Heart left ventricle (tissue), 16 donors: ENCODE measurements at regions of chr2 and their contacts with region 1.

Region 1: GRCh38 chr2:160406591-160407392 is 86.8 kb downstream of the RBMS1 start:
- DNase-seq: peak; percentile 60 to 64 (median 61)
- ATAC-seq: peak; percentile 25 to 58 (median 38)
- H3K4me3 ChIP-seq: peak overlapping the region; percentile 81 to 96 (median 90)
- H3K27ac ChIP-seq: peak overlapping the region; percentile 89 to 99 (median 95)
- H3K4me1 ChIP-seq: peaks cover 8 to 81% (median 70%) of the 10 kb centered on the region in 12 donors
- H3K27me3 ChIP-seq: no peaks in the 10 kb centered on the region
- CTCF ChIP-seq: no peak
- POLR2A ChIP-seq: peak in 1 of 2 donors; percentile 34

Region 2: DNA sequence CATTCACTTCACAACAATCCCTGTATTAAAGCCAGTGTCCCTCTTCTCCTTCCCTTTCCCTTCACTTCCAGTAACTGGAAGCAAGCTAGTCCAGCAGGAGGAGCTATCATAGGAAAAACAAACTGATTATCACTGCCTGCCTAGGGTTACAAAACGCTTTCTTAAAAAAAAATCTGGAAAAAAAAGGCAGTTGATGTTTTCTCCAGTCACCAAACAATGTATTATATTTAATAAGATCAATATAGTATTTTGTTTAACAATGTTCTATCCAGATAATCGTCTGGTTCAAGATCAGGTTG is 128.0 kb before region 1 on chr2:
- intact Hi-C with region 1: loop called in 3 of 10 experiments (anchors 10 kb)
- DNase-seq: no peak
- ATAC-seq: peak in 3 of 4 donors; percentile 69 to 74 (median 70)
- H3K4me3 ChIP-seq: no peak overlapping the region
- H3K27ac ChIP-seq: peak overlapping the region in 6 of 12 donors; percentile 28 to 83 (median 41)
- H3K4me1 ChIP-seq: peaks cover 0 to 45% (median 15%) of the 10 kb centered on the region in 12 donors
- H3K27me3 ChIP-seq: no peaks in the 10 kb centered on the region
- CTCF ChIP-seq: peak; percentile 18 to 75 (median 52)
- POLR2A ChIP-seq: no peak

Region 3: GRCh38 chr2:160294339-160294803 is 112.4 kb before region 1 on chr2:
- intact Hi-C with region 1: loop called in 3 of 10 experiments (anchors 5 to 10 kb)
- DNase-seq: peak; percentile 60 to 84 (median 65)
- ATAC-seq: peak; percentile 51 to 85 (median 80)
- H3K4me3 ChIP-seq: no peak overlapping the region
- H3K27ac ChIP-seq: peak overlapping the region in 11 of 12 donors; percentile 2 to 79 (median 26)
- H3K4me1 ChIP-seq: peaks cover 14 to 85% (median 75%) of the 10 kb centered on the region in 12 donors
- H3K27me3 ChIP-seq: no peaks in the 10 kb centered on the region
- CTCF ChIP-seq: no peak
- POLR2A ChIP-seq: no peak

Region 4: GRCh38 chr2:160367887-160368286 is 38.9 kb before region 1 on chr2:
- intact Hi-C with region 1: loop called in 2 of 10 experiments (anchors 5 kb)
- DNase-seq: no peak
- ATAC-seq: peak in 3 of 4 donors; percentile 20 to 53 (median 27)
- H3K4me3 ChIP-seq: peak overlapping the region in 6 of 12 donors; percentile 19 to 37 (median 30)
- H3K27ac ChIP-seq: peak overlapping the region in 10 of 12 donors; percentile 41 to 92 (median 62)
- H3K4me1 ChIP-seq: peaks cover 27 to 100% (median 92%) of the 10 kb centered on the region in 12 donors
- H3K27me3 ChIP-seq: no peaks in the 10 kb centered on the region
- CTCF ChIP-seq: no peak
- POLR2A ChIP-seq: no peak

Region 5: GRCh38 chr2:160582490-160583145 is 175.8 kb after region 1 on chr2:
- intact Hi-C with region 1: no loop called
- DNase-seq: no peak
- ATAC-seq: peak; percentile 33 to 55 (median 46)
- H3K4me3 ChIP-seq: no peak overlapping the region
- H3K27ac ChIP-seq: peak overlapping the region in 11 of 12 donors; percentile 7 to 78 (median 65)
- H3K4me1 ChIP-seq: peaks cover 0 to 41% (median 25%) of the 10 kb centered on the region in 12 donors
- H3K27me3 ChIP-seq: no peaks in the 10 kb centered on the region
- CTCF ChIP-seq: no peak
- POLR2A ChIP-seq: no peak

Region 6: DNA sequence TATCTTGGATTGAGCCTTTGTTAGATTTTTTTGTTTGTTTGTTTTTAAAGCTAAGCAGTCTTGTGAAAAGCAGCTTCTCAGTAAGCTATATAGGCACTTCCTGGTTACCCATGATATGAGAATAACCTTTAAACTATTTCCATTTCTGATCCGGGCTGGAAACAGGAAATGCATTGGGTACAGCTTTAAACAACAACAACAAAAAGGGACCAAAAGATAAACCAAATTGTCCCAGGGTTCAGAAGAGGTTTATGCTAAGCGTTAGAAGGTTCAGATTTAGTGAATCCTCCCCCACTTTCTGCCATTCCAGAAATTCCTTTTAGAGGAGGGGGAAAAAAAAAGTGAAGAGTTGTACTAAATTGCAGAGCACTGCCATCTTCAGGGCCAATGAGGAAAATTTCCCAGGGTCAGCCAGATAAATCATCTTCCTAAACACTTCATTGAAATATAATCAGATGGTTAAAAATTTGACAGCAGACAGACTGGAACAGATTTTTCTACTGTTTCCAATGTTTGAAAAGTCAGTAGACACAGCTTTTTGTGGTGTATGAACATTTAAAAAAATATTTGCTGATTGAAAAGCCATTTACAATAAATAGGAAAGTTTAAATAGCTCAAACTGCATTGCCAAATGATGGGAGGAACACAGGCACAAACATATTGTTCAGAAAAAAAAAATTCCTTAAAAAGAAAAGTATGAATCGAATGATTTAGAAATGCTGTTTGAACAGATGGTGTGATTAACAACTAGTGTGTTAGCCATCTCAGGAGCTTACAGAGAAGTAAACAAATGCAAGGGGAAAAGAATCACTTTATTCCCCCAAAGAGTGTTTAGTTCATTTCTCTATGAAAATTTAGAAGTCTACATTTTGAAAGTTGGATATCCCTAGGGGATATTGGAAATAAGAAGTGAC is 563.5 kb after region 1 on chr2:
- intact Hi-C with region 1: loop called in 2 of 10 experiments (anchors 10 kb)
- DNase-seq: peak in 2 of 5 donors; percentile 29 to 30
- ATAC-seq: peak in 3 of 4 donors; percentile 58 to 75 (median 69)
- H3K4me3 ChIP-seq: peak overlapping the region in 9 of 12 donors; percentile 17 to 38 (median 29)
- H3K27ac ChIP-seq: peak overlapping the region in 11 of 12 donors; percentile 22 to 76 (median 63)
- H3K4me1 ChIP-seq: peaks cover 0 to 23% (median 10%) of the 10 kb centered on the region in 12 donors
- H3K27me3 ChIP-seq: no peaks in the 10 kb centered on the region
- CTCF ChIP-seq: peak; percentile 63 to 87 (median 80)
- POLR2A ChIP-seq: no peak